ENCODE measurements at regions of chr17 and their contacts with region 1.

Region 1: DNA sequence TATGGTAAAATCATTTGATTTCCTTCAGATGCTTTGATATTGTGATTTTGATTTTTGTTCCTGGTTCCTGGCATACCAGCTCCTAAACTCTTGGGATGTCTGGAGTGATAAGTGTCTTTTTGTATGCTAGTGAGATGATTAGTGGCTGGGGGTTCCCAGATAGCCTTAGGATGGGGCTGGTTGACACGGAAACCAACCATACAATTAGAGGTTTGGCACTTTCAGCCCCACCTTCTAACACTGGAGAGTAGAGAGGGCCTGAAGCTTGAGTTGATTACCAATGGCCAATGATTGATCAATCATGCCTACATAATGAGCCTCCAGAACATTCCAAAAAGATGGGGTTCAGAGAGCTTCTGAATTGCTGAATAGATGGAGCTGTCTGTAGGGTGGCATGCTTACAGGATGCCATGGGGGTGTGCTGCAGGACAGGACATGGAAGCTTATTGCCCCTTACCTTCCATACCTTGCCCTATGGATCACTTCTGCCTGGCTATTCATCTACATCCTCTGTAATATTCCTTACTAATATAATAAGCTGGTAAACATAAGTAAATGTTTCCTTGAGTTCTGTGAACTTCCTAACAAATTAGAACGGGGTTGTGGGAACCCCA is 22.8 kb downstream of the RNF112 start:
- DNase-seq: no peak
- ATAC-seq: no peak
- H3K4me3 ChIP-seq: no peak overlapping the region
- H3K27ac ChIP-seq: no peak overlapping the region
- H3K4me1 ChIP-seq: no peaks in the 10 kb centered on the region
- H3K27me3 ChIP-seq: no peaks in the 10 kb centered on the region
- CTCF ChIP-seq: no peak
- POLR2A ChIP-seq: no peak

Region 2: GRCh38 chr17:19457830-19458271 is 24.0 kb after region 1 on chr17:
- intact Hi-C with region 1: loop called in 1 of 10 experiments (anchors 2 kb)
- DNase-seq: no peak
- ATAC-seq: no peak
- H3K4me3 ChIP-seq: no peak overlapping the region
- H3K27ac ChIP-seq: no peak overlapping the region
- H3K4me1 ChIP-seq: peaks cover 0 to 24% (median 0%) of the 10 kb centered on the region in 12 donors
- H3K27me3 ChIP-seq: no peaks in the 10 kb centered on the region
- CTCF ChIP-seq: no peak
- POLR2A ChIP-seq: no peak